Activated CD8-positive, alpha-beta memory T cell treated with anti-CD3 and anti-CD28 coated beads, Interleukin-2, amount 10 ng/mL, durations not matched to agents 7 days and 5 days (primary cell): ENCODE measurements at regions of chr1 and their contacts with region 1.

Region 1: GRCh38 chr1:13748610-13749505 is 48.9 kb downstream of the PRDM2 start:
- DNase-seq: peak; percentile 96
- ATAC-seq: peak; percentile 96
- H3K4me3 Mint-ChIP-seq: peak overlapping the region; percentile 99
- H3K27ac Mint-ChIP-seq: peak overlapping the region; percentile 90
- H3K4me1 Mint-ChIP-seq: peaks cover 45% of the 10 kb centered on the region
- H3K27me3 Mint-ChIP-seq: no peaks in the 10 kb centered on the region

Region 2: GRCh38 chr1:13730751-13731482 is 17.9 kb before region 1 on chr1:
- CTCF ChIA-PET with region 1: interaction called, 18 read pairs
- DNase-seq: peak; percentile 94
- ATAC-seq: peak; percentile 94
- H3K4me3 Mint-ChIP-seq: peak overlapping the region; percentile 83
- H3K27ac Mint-ChIP-seq: peak overlapping the region; percentile 100
- H3K4me1 Mint-ChIP-seq: peaks cover 73% of the 10 kb centered on the region
- H3K27me3 Mint-ChIP-seq: no peaks in the 10 kb centered on the region